ENCODE measurements at regions of chr7 and their contacts with region 1.

Region 1: GRCh38 chr7:142063551-142064442 is 47.7 kb upstream of the MGAM2 start:
- DNase-seq: no peak
- H3K4me3 ChIP-seq: no peak overlapping the region
- H3K27ac ChIP-seq: no peak overlapping the region
- H3K4me1 ChIP-seq: no peaks in the 10 kb centered on the region
- H3K27me3 ChIP-seq: no peaks in the 10 kb centered on the region
- CTCF ChIP-seq: no peak
- POLR2A ChIP-seq: no peak

Region 2: DNA sequence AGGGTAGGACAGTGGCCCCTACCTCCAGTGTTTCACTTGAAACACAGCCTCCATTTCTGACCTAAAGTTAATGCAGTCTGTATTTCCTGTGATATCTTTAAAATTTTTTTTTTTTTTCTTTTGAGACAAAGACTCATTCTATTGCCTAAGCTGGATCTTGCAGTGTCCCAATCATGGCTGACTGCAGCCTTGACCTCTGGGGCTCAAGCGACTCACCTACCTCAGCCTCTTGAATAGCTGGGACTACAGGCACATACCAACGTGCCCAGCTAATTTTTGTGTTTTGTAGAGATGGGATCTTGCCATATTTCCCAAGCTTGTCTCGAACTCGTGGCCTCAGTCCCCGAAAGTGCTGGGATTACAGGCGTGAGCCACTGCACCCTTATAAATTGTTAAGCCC is 31.1 kb after region 1 on chr7:
- intact Hi-C with region 1: loop called (anchors 2 kb)
- DNase-seq: no peak
- H3K4me3 ChIP-seq: no peak overlapping the region
- H3K27ac ChIP-seq: no peak overlapping the region
- H3K4me1 ChIP-seq: no peaks in the 10 kb centered on the region
- H3K27me3 ChIP-seq: no peaks in the 10 kb centered on the region
- CTCF ChIP-seq: no peak
- POLR2A ChIP-seq: no peak